ENCODE measurements at regions of chr2 and their contacts with region 1.

Region 1: DNA sequence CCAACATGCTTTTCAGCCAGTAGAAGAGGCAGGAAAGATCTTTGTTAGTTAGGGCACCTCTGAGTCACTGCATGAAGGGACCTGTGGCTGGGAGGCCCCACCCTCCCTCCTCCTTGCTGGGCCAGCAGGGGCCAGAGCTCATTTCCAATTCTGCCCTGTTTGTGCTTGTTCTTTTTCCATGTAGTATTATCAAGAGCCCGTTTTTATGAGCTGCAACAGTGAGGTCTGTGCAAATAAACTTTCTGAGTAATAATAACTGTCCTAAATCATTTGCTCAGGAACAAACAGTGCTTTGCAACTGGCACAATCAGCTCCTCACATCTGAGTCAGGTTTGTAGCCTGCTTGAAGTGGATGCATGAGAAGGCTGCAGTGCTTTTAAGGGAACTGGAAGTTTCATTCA is 128.0 kb downstream of the ARL4C start:
- DNase-seq: peak in 8 of 9 experiments; percentile 31 to 70 (median 57)
- ATAC-seq: peak; percentile 74
- H3K4me3 ChIP-seq: no peak overlapping the region
- H3K4me3 Mint-ChIP-seq: peak overlapping the region; percentile 7
- H3K27ac ChIP-seq: peak overlapping the region in 1 of 2 experiments; percentile 54
- H3K27ac Mint-ChIP-seq: peak overlapping the region; percentile 87
- H3K4me1 ChIP-seq: peaks cover 73% of the 10 kb centered on the region
- H3K4me1 Mint-ChIP-seq: peaks cover 77% of the 10 kb centered on the region
- H3K27me3 ChIP-seq: no peaks in the 10 kb centered on the region
- H3K27me3 Mint-ChIP-seq: no peaks in the 10 kb centered on the region
- CTCF ChIP-seq: no peak

Region 2: DNA sequence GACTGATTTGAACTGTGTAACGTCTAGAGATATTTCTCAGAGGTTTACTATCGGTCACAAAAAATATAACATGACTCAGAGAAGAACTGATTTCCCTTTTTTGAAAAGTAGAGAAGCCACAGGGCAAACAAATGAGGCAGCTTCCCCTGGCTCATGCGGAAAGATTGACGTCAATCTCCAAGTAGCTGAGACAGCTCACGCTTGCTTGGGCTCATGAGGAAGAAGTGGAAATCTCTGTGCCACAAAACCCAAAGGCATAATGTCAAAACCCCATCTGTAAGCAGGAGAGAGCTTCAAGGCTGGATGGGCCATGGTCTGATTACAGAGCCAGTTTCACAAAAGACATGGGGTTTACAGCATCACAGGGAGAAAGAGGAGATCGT is 60.1 kb before region 1 on chr2:
- CTCF ChIA-PET with region 1: interaction called, 4 read pairs
- POLR2A ChIA-PET with region 1: no interaction called
- intact Hi-C with region 1: loop called in 1 of 2 experiments (anchors 5 kb)
- DNase-seq: peak; percentile 37 to 88 (median 60)
- ATAC-seq: peak; percentile 83
- H3K4me3 ChIP-seq: no peak overlapping the region
- H3K4me3 Mint-ChIP-seq: peak overlapping the region; percentile 45
- H3K27ac ChIP-seq: peak overlapping the region; percentile 12 to 48
- H3K27ac Mint-ChIP-seq: peak overlapping the region; percentile 93
- H3K4me1 ChIP-seq: peaks cover 21% of the 10 kb centered on the region
- H3K4me1 Mint-ChIP-seq: peaks cover 40% of the 10 kb centered on the region
- H3K27me3 ChIP-seq: no peaks in the 10 kb centered on the region
- H3K27me3 Mint-ChIP-seq: no peaks in the 10 kb centered on the region
- CTCF ChIP-seq: no peak

Region 3: DNA sequence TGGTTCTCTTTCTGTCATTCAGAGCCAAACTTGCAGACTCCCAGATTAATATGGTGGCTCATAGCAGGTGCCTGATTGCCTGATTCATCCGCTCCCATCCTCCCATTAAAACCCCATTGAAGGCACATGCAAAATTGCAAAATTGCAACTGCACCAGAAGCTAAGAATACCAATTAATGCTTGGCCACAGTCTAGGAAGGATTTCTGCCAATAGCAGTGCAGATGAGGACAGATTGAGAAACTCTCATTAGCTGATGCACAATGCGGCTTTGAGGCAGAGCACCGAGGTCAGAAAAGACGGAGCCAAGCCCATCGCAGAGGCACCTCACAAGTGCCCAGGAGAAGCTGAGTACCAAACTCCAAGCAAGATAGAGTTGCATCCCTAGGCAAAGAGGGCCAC is 44.7 kb before region 1 on chr2:
- CTCF ChIA-PET with region 1: no interaction called
- POLR2A ChIA-PET with region 1: no interaction called
- intact Hi-C with region 1: loop called in 1 of 2 experiments (anchors 5 kb)
- DNase-seq: no peak
- ATAC-seq: no peak
- H3K4me3 ChIP-seq: no peak overlapping the region
- H3K4me3 Mint-ChIP-seq: no peak overlapping the region
- H3K27ac ChIP-seq: no peak overlapping the region
- H3K27ac Mint-ChIP-seq: no peak overlapping the region
- H3K4me1 ChIP-seq: peaks cover 10% of the 10 kb centered on the region
- H3K4me1 Mint-ChIP-seq: peaks cover 28% of the 10 kb centered on the region
- H3K27me3 ChIP-seq: no peaks in the 10 kb centered on the region
- H3K27me3 Mint-ChIP-seq: no peaks in the 10 kb centered on the region
- CTCF ChIP-seq: no peak

Region 4: DNA sequence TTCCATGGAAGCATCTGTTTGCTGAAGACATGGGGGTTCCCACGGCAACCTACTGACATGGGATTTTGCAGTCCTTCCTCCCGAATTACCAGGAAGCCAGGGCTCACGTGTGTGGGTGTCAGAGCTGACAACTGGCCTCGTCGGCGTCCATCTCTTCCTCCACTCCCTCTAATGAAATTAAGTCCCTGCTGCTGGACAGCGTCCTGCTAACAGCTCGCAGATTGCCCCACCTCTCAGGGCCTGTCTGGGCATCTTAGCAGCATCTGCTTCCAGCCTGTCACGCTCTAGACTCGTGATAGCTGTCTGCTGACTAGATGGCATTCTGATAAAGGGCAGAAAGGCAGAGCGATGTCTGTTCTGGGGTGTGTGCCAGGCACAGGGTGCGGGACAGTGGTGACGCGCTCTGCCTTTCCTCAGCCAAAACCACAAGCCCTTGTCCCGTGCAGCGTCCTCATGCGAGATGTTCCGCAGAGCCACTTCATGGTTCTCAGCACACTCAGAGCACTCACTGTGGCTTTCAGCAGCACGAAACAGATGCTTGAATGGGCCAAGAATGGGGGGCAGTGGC is 33.1 kb before region 1 on chr2:
- CTCF ChIA-PET with region 1: no interaction called
- POLR2A ChIA-PET with region 1: no interaction called
- intact Hi-C with region 1: no loop called
- DNase-seq: peak; percentile 14 to 79 (median 58)
- ATAC-seq: peak; percentile 91
- H3K4me3 ChIP-seq: peak overlapping the region in 1 of 2 experiments; percentile 14
- H3K4me3 Mint-ChIP-seq: peak overlapping the region; percentile 67
- H3K27ac ChIP-seq: no peak overlapping the region
- H3K27ac Mint-ChIP-seq: peak overlapping the region; percentile 89
- H3K4me1 ChIP-seq: peaks cover 13% of the 10 kb centered on the region
- H3K4me1 Mint-ChIP-seq: peaks cover 23% of the 10 kb centered on the region
- H3K27me3 ChIP-seq: no peaks in the 10 kb centered on the region
- H3K27me3 Mint-ChIP-seq: no peaks in the 10 kb centered on the region
- CTCF ChIP-seq: no peak

Measured in CD8-positive, alpha-beta T cell (primary cell).